CD4-positive, alpha-beta memory T cell (primary cell): ENCODE measurements at regions of chr12 and their contacts with region 1.

Region 1: DNA sequence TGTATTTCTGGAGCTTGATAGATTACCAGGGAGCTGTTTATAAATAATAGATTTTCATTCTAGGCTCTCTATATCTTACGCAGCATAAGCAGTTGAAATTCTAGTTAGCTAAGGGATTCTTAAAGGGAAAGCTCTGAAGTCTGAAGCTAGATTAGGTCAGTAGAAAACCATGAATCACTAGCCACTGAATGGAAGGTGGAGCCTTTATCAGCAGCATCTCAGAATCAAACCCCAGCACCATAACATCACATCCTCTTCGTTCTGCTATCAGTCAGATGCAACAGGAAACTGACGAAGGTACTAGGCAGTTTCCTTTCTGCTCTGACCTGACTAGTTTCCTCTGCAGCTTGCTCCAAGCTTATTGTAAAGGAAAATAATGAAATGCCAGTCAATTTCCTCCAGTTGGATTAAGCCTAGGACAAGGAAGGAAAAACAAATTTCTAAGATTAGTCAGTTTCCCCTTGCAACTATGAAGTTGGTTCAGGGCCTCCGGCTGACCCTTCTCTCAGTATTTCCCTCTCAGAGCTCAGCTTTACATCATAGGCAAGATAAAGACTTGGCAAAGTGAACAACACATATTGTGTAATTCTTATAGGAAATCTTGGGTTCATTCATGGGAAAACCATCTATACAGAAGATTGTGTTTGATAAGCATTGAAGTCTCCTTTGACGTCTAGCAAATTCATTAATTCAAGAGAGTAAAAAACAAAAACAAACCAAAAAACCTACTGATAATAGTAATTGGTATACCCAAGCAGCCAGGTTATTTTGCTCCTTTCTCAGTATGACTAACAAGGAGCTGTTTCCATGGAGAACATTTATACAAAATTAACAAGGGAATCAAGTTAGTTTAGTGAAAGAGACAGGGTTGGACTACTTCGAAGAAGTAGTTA is 43.4 kb upstream of the CFAP54 start:
- DNase-seq: peak; percentile 82 to 91 (median 86)
- H3K4me3 ChIP-seq: no peak overlapping the region
- H3K4me3 Mint-ChIP-seq: peak overlapping the region in 7 of 8 donors; percentile 31 to 72 (median 67)
- H3K27ac ChIP-seq: peak overlapping the region; percentile 92
- H3K27ac Mint-ChIP-seq: peak overlapping the region; percentile 93 to 99 (median 98)
- H3K4me1 ChIP-seq: peaks cover 36% of the 10 kb centered on the region
- H3K4me1 Mint-ChIP-seq: peaks cover 27 to 52% (median 36%) of the 10 kb centered on the region in 4 donors
- H3K27me3 ChIP-seq: no peaks in the 10 kb centered on the region
- H3K27me3 Mint-ChIP-seq: no peaks in the 10 kb centered on the region

Region 2: DNA sequence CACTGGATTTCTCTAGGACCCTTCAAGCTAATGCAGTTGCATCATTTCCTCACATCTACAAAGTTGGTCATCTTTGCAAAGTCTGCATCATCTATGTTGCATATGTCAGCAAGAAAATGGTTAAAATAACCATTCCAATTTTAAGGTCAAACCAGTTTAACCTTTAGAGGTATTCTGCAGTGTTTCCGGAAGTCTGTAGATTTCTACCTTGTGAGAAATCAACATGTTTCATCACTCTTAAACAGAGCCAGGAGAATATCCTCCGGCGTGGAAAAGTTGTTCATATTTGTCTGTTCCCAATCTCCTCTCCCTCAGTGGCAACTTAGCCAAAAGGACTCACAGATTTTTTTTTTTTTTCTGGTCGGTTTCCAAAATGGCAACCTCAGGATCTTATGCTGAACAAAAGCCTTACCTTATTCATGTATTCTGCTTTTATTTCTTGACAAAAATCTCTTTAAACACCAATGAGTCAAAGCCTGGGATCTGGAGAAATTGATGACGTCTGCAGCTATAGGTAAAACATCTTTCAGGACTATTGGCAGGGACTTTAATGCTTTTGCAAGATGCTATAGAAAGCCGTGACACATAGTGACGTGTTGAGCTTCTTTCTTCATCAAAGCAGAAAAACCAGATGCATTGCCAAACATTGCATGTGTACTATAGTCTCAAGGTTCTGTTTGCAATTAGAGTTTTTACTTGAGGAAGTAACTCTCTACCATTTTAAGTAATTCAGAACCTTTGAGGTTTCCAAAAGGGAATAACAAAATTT is 29.7 kb before region 1 on chr12:
- CTCF ChIA-PET with region 1: interaction called, 6 read pairs
- POLR2A ChIA-PET with region 1: interaction called, 12 read pairs
- intact Hi-C with region 1: no loop called
- DNase-seq: no peak
- H3K4me3 ChIP-seq: no peak overlapping the region
- H3K4me3 Mint-ChIP-seq: no peak overlapping the region
- H3K27ac ChIP-seq: no peak overlapping the region
- H3K27ac Mint-ChIP-seq: peak overlapping the region in 1 of 7 donors; percentile 48
- H3K4me1 ChIP-seq: peaks cover 17% of the 10 kb centered on the region
- H3K4me1 Mint-ChIP-seq: peaks cover 7 to 31% (median 13%) of the 10 kb centered on the region in 4 donors
- H3K27me3 ChIP-seq: no peaks in the 10 kb centered on the region
- H3K27me3 Mint-ChIP-seq: no peaks in the 10 kb centered on the region

Region 3: DNA sequence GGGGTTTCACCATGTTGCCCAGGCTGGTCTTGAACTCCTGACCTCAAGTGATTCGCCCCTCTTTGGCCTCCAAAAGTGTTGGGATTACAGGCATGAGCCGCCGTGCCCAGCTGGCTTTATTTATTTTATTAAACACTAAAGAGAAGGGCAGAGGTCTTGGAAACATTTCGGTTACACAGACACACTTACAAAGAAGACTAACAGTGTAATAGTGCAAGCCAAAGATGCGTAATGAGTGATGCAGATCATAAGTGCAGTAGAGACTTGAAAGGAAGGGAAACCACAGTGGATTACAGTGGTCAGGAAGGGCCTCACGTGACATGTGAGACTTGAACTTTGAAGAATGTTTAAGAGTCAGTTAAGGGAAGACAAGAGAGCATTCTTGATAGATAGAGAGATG is 11.8 kb before region 1 on chr12:
- CTCF ChIA-PET with region 1: interaction called, 17 read pairs
- POLR2A ChIA-PET with region 1: interaction called, 14 read pairs
- intact Hi-C with region 1: loop called (anchors 1 kb)
- DNase-seq: peak; percentile 87 to 92 (median 89)
- H3K4me3 ChIP-seq: no peak overlapping the region
- H3K4me3 Mint-ChIP-seq: peak overlapping the region; percentile 4 to 74 (median 56)
- H3K27ac ChIP-seq: peak overlapping the region; percentile 56
- H3K27ac Mint-ChIP-seq: peak overlapping the region; percentile 52 to 97 (median 88)
- H3K4me1 ChIP-seq: peaks cover 19% of the 10 kb centered on the region
- H3K4me1 Mint-ChIP-seq: peaks cover 11 to 32% (median 23%) of the 10 kb centered on the region in 4 donors
- H3K27me3 ChIP-seq: no peaks in the 10 kb centered on the region
- H3K27me3 Mint-ChIP-seq: no peaks in the 10 kb centered on the region

Region 4: GRCh38 chr12:96501139-96501761 is 55.3 kb after region 1 on chr12:
- CTCF ChIA-PET with region 1: interaction called, 4 read pairs
- POLR2A ChIA-PET with region 1: interaction called, 6 read pairs
- intact Hi-C with region 1: loop called (anchors 5 kb)
- DNase-seq: peak in 4 of 5 donors; percentile 29 to 65 (median 37)
- H3K4me3 ChIP-seq: peak overlapping the region in 1 of 2 donors; percentile 17
- H3K4me3 Mint-ChIP-seq: peak overlapping the region in 7 of 8 donors; percentile 35 to 74 (median 53)
- H3K27ac ChIP-seq: peak overlapping the region; percentile 18
- H3K27ac Mint-ChIP-seq: peak overlapping the region; percentile 79 to 98 (median 89)
- H3K4me1 ChIP-seq: peaks cover 46% of the 10 kb centered on the region
- H3K4me1 Mint-ChIP-seq: peaks cover 44 to 63% (median 54%) of the 10 kb centered on the region in 4 donors
- H3K27me3 ChIP-seq: no peaks in the 10 kb centered on the region
- H3K27me3 Mint-ChIP-seq: no peaks in the 10 kb centered on the region